Calu3 (cell line): ENCODE measurements at regions of chr19 and their contacts with region 1.

Region 1: GRCh38 chr19:43668406-43669158 is 1.4 kb downstream of the PLAUR start:
- DNase-seq: peak; percentile 98
- H3K4me3 Mint-ChIP-seq: peak overlapping the region; percentile 99
- H3K27ac Mint-ChIP-seq: peak overlapping the region; percentile 72
- H3K4me1 Mint-ChIP-seq: peaks cover 23% of the 10 kb centered on the region
- H3K27me3 Mint-ChIP-seq: no peaks in the 10 kb centered on the region
- CTCF ChIP-seq: no peak

Region 2: DNA sequence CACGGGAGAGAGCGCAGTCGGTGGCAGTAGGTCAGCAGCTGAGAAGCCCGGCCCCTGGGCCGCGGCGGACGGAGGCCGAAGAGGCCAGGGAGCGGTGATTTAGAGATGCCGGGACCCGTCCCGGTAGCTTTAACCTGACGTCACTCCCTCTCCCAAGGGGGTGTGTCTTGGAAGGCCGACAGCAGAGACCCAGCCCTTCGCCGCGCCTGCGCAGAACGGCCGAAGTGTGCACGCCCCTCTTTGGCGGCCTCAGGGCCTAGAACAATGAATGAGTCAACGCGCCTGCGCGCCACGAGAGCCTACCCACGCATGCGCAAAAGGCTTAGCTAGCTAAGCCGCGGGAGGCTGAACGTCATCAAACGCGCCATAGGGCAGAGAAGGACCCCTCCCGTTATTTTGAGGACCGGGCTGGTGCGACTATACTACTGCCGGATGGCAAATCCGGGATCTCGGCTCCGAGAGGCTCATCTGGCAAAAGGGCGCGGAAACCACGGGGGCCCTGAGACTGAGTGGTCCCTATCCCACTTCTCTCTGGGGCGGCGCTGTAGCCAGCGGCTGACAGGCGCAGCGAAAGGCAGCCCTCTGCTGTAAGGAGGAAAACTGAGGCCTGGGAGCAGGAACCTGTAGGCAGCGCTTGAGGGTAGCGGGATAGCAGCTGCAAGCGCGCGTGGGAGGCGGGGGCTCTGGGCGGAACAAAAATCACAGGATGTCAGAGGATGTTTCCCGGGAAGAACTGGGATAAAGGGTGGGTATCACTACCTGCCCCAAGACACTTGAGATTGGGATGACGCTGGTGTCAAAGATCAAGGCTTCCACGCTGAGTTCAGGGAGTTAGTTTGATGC is 72.4 kb before region 1 on chr19 and contains the starts of genes IRGQ and ZNF576:
- CTCF ChIA-PET with region 1: interaction called, 10 read pairs
- intact Hi-C with region 1: no loop called
- DNase-seq: peak; percentile 100
- H3K4me3 Mint-ChIP-seq: peak within 1 kb of the TSS; percentile 99
- H3K27ac Mint-ChIP-seq: peak within 1 kb of the TSS; percentile 98
- H3K4me1 Mint-ChIP-seq: peaks cover 31% of the 10 kb centered on the region
- H3K27me3 Mint-ChIP-seq: no peaks in the 10 kb centered on the region
- CTCF ChIP-seq: no peak
- total RNA-seq, gene IRGQ: 34.2 and 36.1 TPM in 2 replicates
- total RNA-seq, gene ZNF576: 19.4 and 20.7 TPM in 2 replicates

Region 3: DNA sequence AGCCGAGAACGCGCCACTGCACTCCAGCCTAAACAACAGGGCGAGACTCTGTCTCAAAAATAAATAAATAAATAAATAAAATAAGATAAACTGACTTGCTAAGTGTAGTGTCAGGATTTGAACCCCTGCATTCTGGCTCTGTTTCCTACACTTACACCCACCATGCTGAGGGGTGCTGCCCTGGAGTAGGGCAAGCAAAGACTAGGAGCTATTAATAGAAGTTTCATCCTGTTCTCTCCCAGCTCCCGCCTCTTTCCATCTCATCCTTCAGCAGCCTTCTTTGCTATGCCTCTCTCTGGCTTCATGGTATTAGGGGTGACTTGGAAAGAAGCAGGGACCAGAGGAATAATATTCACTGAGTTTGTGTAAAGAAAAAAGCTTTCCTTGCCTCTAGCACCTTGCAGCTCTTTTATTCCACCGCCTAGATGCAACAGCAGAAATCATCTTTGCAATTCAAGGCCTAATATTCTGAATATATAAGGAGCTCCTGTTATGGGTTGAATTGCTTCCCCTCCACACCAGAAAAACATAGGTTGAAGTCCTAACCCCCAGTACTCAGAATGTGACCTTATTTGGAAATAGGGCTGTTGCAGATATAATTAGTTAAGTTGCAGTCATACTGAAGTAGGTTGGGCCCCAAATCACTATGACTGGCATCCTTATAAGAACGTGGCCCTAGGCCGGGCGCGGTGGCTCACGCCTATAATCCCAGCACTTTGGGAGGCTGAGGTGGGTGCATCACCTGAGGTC is 10.1 kb after region 1 on chr19:
- CTCF ChIA-PET with region 1: interaction called, 13 read pairs
- intact Hi-C with region 1: no loop called
- DNase-seq: no peak
- H3K4me3 Mint-ChIP-seq: no peak overlapping the region
- H3K27ac Mint-ChIP-seq: no peak overlapping the region
- H3K4me1 Mint-ChIP-seq: peaks cover 15% of the 10 kb centered on the region
- H3K27me3 Mint-ChIP-seq: no peaks in the 10 kb centered on the region
- CTCF ChIP-seq: no peak

Region 4: DNA sequence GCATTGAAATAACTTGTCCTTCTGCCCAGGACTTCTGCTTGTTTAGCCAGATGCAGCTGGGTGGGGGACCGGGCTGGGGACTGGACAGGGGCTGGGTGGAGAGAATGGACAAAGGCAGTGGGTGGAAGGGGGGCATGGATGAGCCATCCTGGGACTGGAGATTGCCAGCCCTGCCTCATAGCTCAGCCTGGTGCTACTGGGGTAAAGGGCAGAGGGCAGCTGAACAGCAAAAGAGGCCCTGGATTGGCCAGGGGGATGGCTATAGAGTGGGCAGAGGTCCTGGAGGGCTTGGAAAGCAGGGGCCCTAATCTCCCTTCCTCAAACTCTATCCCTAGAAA is 19.0 kb after region 1 on chr19:
- CTCF ChIA-PET with region 1: interaction called, 31 read pairs
- intact Hi-C with region 1: no loop called
- DNase-seq: no peak
- H3K4me3 Mint-ChIP-seq: no peak overlapping the region
- H3K27ac Mint-ChIP-seq: no peak overlapping the region
- H3K4me1 Mint-ChIP-seq: peaks cover 18% of the 10 kb centered on the region
- H3K27me3 Mint-ChIP-seq: no peaks in the 10 kb centered on the region
- CTCF ChIP-seq: no peak

Region 5: DNA sequence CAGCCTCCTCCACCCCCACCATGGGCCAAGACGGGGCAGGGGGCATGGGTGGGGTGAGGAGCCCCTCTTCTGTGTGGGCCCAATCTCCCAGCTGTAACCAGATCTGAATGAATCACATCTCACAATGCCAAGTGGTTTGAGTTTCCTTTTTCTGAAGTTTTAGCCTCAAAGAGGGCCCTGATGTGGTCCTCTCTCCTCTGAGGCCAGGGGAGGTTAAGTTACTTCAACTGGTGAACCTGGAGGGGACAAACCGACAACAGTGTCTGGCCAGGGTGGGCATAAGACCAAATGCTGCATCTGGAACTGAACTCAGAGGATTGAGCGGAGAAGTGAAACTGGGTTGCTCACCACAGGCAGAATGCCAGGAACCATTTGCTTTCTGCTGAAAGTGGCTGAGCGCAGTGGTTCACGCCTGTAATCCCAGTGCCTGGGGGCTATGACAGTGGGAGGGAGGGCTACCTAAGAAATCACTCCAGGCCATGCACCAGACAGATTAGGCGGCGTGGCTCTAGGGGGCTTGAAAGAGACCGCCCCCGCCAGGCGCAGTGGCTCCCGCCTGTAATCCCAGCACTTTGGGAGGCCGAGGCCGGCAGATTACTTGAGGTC is 31.9 kb after region 1 on chr19:
- CTCF ChIA-PET with region 1: interaction called, 4 read pairs
- intact Hi-C with region 1: loop called (anchors 2 kb)
- DNase-seq: no peak
- H3K4me3 Mint-ChIP-seq: peak overlapping the region; percentile 65
- H3K27ac Mint-ChIP-seq: peak overlapping the region; percentile 94
- H3K4me1 Mint-ChIP-seq: peaks cover 51% of the 10 kb centered on the region
- H3K27me3 Mint-ChIP-seq: no peaks in the 10 kb centered on the region
- CTCF ChIP-seq: no peak

Region 6: GRCh38 chr19:43723588-43723987 is 55.0 kb after region 1 on chr19:
- CTCF ChIA-PET with region 1: interaction called, 6 read pairs
- intact Hi-C with region 1: loop called (anchors 5 kb)
- DNase-seq: peak; percentile 43
- H3K4me3 Mint-ChIP-seq: no peak overlapping the region
- H3K27ac Mint-ChIP-seq: no peak overlapping the region
- H3K4me1 Mint-ChIP-seq: no peaks in the 10 kb centered on the region
- H3K27me3 Mint-ChIP-seq: no peaks in the 10 kb centered on the region
- CTCF ChIP-seq: peak; percentile 46

Region 7: DNA sequence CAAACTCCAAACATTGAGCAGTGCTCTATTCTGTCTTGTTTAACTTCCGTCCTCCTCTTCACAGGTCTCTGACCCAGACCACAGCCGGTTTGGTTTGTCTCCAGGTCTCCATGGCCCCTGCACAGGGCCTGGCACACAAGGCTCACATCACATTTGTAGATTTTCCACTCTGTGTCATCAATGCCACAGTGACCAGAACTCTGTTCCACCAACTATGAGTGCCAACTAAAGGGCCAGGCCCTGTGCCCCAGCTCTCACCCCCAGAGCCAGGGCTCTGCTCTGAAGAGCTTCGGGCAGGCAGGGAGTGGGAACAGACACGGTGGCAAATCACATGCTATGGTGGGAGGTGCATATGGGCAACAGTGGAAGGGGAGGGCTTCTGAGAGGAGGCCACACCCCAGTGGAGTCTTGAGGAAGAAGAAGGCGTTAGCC is 70.2 kb after region 1 on chr19:
- CTCF ChIA-PET with region 1: interaction called, 13 read pairs
- intact Hi-C with region 1: no loop called
- DNase-seq: no peak
- H3K4me3 Mint-ChIP-seq: peak overlapping the region; percentile 29
- H3K27ac Mint-ChIP-seq: peak overlapping the region; percentile 84
- H3K4me1 Mint-ChIP-seq: peaks cover 41% of the 10 kb centered on the region
- H3K27me3 Mint-ChIP-seq: no peaks in the 10 kb centered on the region
- CTCF ChIP-seq: no peak